ENCODE measurements at regions of chr9 and their contacts with region 1.

Region 1: DNA sequence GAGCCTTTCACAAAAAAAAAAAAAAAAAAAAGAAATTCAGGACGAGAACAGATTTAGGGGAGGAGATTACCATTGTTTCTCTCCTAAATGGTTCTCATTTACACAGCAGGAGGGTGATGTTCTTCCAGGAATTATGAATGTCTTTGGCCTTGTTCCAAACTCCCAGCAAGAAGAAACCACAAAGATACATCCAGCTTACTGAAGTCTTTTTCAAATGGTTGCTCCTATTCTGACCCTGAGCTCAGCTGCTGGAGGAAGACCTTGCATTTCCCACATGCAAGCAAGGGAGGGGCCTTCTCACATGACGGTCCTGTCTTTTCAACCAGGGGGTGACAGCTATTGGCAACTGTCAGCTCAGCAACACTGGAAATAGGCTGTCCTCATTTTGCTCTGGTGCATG is 203.0 kb upstream of the VLDLR start:
- DNase-seq: peak; percentile 41
- H3K4me3 ChIP-seq: no peak overlapping the region
- H3K27ac ChIP-seq: no peak overlapping the region
- H3K4me1 ChIP-seq: no peaks in the 10 kb centered on the region
- H3K27me3 ChIP-seq: no peaks in the 10 kb centered on the region
- CTCF ChIP-seq: no peak

Region 2: DNA sequence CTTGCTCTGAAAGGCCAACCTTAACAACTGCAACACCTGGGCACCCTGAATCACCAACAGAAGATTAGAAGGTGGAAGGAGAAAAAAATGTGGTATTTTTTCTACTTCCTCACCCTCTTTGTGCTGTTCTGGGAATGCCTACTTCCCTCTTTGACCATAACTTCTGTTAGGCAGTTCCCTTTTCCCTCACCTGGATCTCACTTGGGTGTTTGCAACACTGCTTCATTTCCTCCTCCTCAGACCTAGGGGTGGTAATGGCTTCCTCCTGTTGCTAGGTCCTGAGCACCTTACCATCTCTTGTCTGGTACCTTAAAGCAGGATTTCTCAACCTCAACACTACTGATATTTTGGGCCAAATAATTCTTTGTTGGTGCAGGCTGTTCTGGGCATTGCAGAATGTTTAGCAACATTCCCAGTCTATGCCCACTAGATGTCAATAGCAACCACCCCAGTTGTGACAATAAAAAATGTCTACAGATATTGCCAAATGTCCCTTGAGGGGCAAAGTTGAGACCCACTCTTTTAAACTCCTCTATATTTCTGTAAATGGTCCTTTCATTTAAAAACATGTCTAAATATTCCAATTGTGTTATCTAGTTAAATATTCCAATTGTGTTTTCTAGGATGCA is 97.0 kb before region 1 on chr9:
- CTCF ChIA-PET with region 1: no interaction called
- dilution Hi-C with region 1: no loop called
- in situ Hi-C with region 1: no loop called
- intact Hi-C with region 1: loop called (anchors 10 kb)
- DNase-seq: no peak
- H3K4me3 ChIP-seq: no peak overlapping the region
- H3K27ac ChIP-seq: no peak overlapping the region
- H3K4me1 ChIP-seq: peaks cover 8% of the 10 kb centered on the region
- H3K27me3 ChIP-seq: no peaks in the 10 kb centered on the region
- CTCF ChIP-seq: peak in 1 of 2 donors; percentile 33

Measured in mammary epithelial cell (primary cell).